GM23248 (cell line): ENCODE measurements at regions of chr3 and their contacts with region 1.

Region 1: DNA sequence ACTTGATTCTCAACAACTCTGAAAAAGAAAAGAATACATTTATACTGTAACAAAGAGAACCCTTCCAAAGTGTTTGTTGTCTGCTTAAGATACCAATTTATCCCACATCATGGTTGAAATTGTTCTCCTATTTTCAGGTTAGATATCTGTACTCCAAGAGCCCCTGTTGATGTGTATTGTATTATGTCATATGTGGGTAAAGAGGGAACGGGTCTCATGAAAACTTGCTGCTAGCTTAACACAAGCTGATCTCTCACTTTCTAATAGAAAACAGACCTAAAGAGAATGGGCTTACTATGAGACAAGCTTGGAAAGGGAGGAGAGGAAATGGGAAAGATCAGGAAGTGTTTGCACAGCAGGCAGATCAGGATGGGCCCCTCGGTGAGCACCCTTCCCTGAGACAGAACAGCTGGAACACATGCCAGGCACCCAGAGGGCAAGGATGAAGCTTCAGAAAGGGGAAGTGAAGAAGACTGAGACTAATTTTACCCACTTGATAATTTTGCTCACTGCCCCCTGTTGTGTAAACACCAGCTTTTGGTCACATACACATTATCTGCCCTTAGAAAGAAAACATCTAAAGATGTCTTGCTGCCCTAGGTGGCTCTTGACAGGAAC is 747.9 kb upstream of the CCDC54 start:
- DNase-seq: no peak
- H3K4me3 ChIP-seq: no peak overlapping the region
- H3K27ac ChIP-seq: no peak overlapping the region
- H3K4me1 ChIP-seq: peaks cover 18% of the 10 kb centered on the region
- H3K27me3 ChIP-seq: no peaks in the 10 kb centered on the region

Region 2: GRCh38 chr3:106423321-106424225 is 205.8 kb before region 1 on chr3:
- in situ Hi-C with region 1: no loop called
- DNase-seq: peak; percentile 22
- H3K4me3 ChIP-seq: no peak overlapping the region
- H3K27ac ChIP-seq: no peak overlapping the region
- H3K4me1 ChIP-seq: peaks cover 34% of the 10 kb centered on the region
- H3K27me3 ChIP-seq: no peaks in the 10 kb centered on the region

Region 3: DNA sequence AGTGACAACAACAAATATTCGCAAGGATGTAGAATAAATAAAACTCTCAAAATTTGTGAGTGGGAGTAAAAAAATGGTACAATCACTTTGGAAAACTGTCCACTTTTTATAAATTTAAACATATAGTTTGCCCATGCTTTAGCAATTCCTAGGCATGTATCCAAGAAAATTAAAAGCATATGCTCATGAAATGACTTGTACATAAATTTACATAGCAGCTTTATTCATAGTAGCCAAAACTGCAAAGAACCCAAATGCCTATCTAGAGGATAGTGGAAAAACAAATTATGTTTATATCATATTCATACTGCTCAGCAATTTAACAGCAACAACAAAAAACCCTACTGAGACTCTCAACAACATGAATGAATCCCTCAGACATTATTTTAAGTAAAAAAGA is 384.3 kb after region 1 on chr3:
- in situ Hi-C with region 1: no loop called
- DNase-seq: no peak
- H3K4me3 ChIP-seq: no peak overlapping the region
- H3K27ac ChIP-seq: no peak overlapping the region
- H3K4me1 ChIP-seq: no peaks in the 10 kb centered on the region
- H3K27me3 ChIP-seq: no peaks in the 10 kb centered on the region

Region 4: DNA sequence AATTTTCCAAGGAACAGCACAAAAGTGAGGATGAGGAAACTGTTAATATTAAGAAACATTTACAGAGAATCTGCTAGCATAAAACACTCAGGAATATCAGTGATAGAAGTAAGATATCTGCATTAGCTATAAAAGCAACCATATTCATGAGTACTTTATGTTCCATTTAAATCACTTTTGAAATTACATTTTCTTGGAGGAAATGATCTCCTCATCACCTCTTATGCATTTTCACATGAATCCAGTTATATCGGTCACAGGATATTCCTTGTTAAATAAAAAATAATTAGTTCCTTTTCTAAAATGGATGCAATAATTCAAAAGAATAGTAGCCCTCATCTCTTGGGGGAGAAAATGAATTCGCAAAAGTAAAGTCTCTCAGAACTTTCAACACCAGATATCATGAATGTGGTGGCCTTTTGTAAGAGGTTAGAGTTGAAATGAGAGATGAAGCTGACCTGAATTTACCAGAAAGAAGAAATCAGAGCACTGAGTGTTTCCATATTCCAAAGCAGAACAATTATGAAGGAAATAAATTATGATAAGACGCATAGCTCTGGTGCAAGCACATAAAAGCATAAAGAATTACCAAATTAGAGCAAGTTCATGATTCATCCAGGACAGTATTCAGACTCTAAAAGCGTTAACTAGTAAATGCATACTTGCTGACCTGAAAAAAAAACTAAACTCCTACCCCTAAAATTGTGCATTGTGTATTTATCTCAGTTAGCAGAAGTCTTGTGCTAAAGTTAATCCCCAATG is 426.0 kb after region 1 on chr3:
- in situ Hi-C with region 1: loop called (anchors 10 kb)
- DNase-seq: no peak
- H3K4me3 ChIP-seq: no peak overlapping the region
- H3K27ac ChIP-seq: no peak overlapping the region
- H3K4me1 ChIP-seq: no peaks in the 10 kb centered on the region
- H3K27me3 ChIP-seq: no peaks in the 10 kb centered on the region